Calu3 (cell line): ENCODE measurements at regions of chr2 and their contacts with region 1.

Region 1: GRCh38 chr2:160970052-160970965 is 189.9 kb upstream of the TANK start:
- DNase-seq: peak; percentile 50
- H3K4me3 Mint-ChIP-seq: peak overlapping the region; percentile 44
- H3K27ac Mint-ChIP-seq: peak overlapping the region; percentile 47
- H3K4me1 Mint-ChIP-seq: no peaks in the 10 kb centered on the region
- H3K27me3 Mint-ChIP-seq: no peaks in the 10 kb centered on the region
- CTCF ChIP-seq: peak; percentile 70

Region 2: GRCh38 chr2:160109936-160110673 is 860.2 kb before region 1 on chr2:
- CTCF ChIA-PET with region 1: interaction called, 3 read pairs
- intact Hi-C with region 1: loop called (anchors 1 kb)
- DNase-seq: peak; percentile 75
- H3K4me3 Mint-ChIP-seq: no peak overlapping the region
- H3K27ac Mint-ChIP-seq: no peak overlapping the region
- H3K4me1 Mint-ChIP-seq: no peaks in the 10 kb centered on the region
- H3K27me3 Mint-ChIP-seq: no peaks in the 10 kb centered on the region
- CTCF ChIP-seq: peak; percentile 74

Region 3: DNA sequence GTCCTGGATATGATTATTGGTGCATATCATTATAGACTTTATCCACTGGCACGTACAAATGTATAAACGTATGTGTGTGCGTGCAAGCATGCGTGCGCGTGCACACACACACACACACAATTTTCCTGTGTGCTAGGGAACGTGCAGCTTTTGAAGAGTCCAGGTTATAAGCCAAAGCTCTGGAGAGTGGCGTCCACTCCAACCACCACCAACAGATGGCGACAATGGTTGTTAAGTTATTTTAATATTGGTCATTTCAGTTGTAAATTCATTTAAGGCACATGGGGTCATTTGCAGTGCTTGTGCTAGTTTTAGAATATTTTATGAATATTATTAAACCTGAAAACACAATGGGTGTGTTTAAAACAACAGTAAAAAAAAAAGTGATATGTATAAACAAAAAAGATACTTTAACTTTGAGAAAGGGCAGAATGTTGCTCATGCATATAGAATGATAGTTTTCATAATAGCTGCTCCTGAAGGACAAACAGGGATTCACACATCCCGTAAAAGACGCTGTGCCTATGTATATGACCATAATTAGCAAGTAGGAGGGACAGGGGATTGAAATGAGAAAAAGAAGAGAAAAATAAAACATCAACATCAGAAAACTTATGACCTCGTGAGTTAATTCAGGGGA is 646.0 kb before region 1 on chr2:
- CTCF ChIA-PET with region 1: interaction called, 18 read pairs
- intact Hi-C with region 1: loop called (anchors 1 kb)
- DNase-seq: peak; percentile 58
- H3K4me3 Mint-ChIP-seq: no peak overlapping the region
- H3K27ac Mint-ChIP-seq: no peak overlapping the region
- H3K4me1 Mint-ChIP-seq: peaks cover 56% of the 10 kb centered on the region
- H3K27me3 Mint-ChIP-seq: no peaks in the 10 kb centered on the region
- CTCF ChIP-seq: peak; percentile 56

Region 4: DNA sequence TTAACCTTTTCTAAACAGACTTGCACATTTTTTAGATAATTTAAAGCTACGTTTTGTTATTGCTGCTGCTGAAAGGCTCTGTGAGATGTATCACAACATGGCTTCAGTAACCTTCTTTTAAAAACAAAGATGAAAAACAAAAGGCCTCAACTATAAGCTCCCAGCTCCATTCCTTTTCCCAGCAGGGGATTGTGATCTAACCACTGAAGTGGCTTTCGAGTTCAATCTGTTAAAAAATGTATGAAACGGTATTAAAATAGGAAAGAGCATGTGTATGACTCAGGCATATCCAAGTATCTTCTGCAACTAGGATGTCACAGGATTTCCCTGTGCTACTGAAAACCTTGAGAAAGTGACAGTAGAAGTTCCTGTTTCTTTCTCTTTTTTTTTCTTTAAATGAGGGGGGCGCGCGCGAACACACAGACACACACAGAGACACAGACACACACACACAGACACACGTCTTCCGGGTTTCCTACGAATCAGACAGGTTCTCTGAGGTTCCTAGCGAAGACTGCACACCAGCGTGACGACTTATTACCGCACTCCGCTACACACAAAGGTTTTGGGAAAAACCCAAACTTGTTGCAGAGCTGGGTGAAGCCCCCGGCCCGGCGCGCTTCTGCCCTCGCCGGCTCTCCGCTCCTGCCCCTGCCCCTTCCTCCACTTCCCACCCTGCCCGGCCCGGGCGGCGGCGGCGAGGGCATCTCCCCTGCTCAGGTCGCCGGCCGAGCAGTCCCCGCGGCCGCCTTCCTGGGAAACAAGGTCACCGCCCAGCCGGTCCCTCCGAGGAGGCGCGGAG is 563.5 kb before region 1 on chr2:
- CTCF ChIA-PET with region 1: interaction called, 3 read pairs
- intact Hi-C with region 1: loop called (anchors 2 kb)
- DNase-seq: peak; percentile 48
- H3K4me3 Mint-ChIP-seq: peak overlapping the region; percentile 63
- H3K27ac Mint-ChIP-seq: peak overlapping the region; percentile 85
- H3K4me1 Mint-ChIP-seq: peaks cover 67% of the 10 kb centered on the region
- H3K27me3 Mint-ChIP-seq: no peaks in the 10 kb centered on the region
- CTCF ChIP-seq: no peak

Region 5: DNA sequence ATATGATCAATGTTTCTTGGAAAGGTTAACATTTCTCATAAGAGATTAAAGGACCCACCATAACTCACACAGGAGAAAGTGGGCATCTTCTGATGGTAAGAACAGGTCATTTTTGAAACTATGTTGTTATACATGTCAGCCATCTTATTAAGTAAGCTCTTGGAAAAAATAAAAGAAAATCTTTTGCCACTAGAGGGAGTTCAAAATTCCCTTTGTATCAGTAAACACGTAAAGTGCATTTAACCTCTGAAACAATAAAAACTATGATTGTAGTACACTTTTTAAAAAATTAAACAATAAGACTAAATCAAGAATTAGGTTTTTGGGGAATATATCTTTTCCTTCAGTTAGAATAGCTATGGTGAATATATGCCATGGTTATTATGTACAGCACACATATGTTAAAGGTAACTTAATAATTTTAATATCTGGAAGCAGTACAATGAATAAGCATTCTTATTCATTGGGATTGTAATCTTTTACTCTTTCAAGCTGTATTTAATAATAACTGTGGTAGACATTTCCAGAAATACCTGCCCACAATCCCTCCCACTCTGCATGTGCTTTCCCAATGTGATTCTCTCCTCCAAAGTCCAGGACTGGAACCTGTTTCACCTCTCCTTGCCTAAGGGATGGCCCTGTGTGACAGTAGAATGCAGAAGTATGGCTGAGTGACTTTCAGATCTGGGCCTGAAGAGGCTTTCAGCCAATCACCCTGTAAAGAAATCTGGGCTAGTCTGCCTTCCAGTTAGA is 540.9 kb before region 1 on chr2:
- CTCF ChIA-PET with region 1: interaction called, 12 read pairs
- intact Hi-C with region 1: loop called (anchors 1 kb)
- DNase-seq: no peak
- H3K4me3 Mint-ChIP-seq: no peak overlapping the region
- H3K27ac Mint-ChIP-seq: peak overlapping the region; percentile 26
- H3K4me1 Mint-ChIP-seq: peaks cover 33% of the 10 kb centered on the region
- H3K27me3 Mint-ChIP-seq: no peaks in the 10 kb centered on the region
- CTCF ChIP-seq: peak; percentile 39

Region 6: DNA sequence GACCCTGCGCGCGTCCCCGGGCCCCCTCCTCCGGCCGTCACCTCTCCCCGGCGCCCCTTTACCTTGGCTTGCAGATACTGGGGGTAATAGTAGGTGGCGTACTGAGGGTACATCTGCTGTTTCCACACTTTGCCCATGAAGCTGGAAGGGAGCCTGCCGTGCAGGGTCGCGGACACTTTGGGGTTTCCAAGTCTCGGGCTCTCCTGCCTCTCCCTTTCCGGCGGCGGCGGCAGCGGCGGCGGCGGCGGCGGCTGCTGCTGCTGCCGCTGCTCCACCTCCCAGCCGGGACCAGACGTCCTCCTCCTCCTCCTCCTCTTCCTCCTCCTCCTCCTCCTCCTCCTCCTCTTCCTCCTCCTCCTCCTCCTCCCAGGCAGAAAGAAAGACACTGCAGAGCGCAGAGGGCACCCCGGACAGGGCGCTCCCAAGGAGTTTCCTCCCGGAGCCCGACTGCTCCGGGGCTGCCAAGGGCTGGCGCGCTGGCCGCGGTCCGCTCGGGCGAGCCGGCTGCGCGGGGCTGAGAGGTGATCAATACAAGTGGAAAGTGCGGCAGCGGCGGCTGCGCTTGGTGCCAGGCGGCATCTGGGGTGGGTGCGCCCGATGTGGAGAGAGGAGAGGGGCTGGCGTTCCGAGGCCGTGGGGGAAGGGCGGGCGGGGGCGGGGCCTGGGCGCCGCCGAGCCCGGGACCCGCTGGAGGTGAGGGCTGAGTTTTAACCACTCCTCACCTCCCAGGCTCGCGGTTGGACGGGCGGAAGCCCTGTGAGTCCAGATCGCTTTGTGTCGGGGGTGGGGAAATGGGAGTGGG is 476.9 kb before region 1 on chr2 and contains the start of gene RBMS1:
- CTCF ChIA-PET with region 1: interaction called, 4 read pairs
- intact Hi-C with region 1: loop called (anchors 2 kb)
- DNase-seq: peak; percentile 58
- H3K4me3 Mint-ChIP-seq: peak within 1 kb of the TSS; percentile 98
- H3K27ac Mint-ChIP-seq: peak within 1 kb of the TSS; percentile 82
- H3K4me1 Mint-ChIP-seq: peaks cover 8% of the 10 kb centered on the region
- H3K27me3 Mint-ChIP-seq: no peaks in the 10 kb centered on the region
- CTCF ChIP-seq: no peak
- total RNA-seq, gene RBMS1: 57.9 and 61.9 TPM in 2 replicates

Region 7: DNA sequence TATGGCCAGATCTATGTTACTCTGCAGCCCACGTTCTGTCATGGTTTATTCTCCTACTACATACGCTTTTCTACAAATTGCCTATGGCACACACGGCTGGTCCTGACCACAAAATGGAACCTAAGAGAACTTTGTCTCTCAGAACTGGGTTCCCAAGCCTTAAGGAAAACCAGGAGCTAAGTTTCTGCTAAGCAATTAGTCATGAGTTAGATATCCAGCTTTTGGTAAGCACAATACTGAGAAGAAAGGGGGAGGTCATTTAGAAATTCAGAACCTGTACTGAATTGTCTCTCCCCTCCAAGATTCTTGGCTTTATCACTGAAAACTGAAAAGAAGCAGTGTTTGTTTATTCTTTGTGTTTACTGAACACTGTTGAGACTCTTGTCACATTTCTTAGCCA is 93.5 kb before region 1 on chr2:
- CTCF ChIA-PET with region 1: no interaction called
- intact Hi-C with region 1: no loop called
- DNase-seq: no peak
- H3K4me3 Mint-ChIP-seq: no peak overlapping the region
- H3K27ac Mint-ChIP-seq: no peak overlapping the region
- H3K4me1 Mint-ChIP-seq: peaks cover 8% of the 10 kb centered on the region
- H3K27me3 Mint-ChIP-seq: no peaks in the 10 kb centered on the region
- CTCF ChIP-seq: no peak